ENCODE measurements at regions of chr20 and their contacts with region 1.

Region 1: DNA sequence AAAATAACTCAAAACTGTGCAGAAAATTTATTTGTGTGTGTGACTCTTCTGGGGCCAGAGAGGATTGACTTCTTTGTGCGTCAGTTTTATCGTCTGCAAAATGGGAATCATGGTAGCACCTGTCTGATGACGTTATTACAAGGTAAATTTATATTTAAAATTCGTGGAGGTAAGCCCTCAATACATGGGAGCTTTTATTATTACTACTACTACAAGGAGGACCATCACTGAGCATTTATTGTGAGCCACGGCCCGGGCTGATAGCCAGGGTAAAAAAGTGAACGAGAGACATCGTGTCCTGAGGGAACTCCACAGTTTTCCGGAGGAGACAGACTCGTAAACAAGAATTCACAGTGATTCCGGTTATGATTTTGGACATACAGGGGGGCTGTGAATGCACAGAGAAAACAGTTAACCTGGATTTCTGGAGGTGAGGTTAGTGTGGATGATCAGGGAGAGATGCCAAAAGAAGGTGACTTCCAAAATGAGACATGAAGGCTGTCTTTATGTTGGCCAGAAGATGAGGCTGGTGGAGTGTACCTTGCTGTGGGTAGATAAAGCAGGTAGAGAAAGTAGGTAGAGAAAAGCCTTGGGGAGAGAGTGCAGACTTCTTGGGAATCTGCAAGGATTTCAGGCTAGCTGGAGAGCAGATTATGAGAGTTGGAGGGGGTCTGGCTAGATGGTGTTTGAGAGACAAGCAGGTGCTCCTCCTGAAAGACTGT is 10.6 kb upstream of the SERINC3 start:
- DNase-seq: no peak
- H3K4me3 ChIP-seq: peak overlapping the region; percentile 67
- CTCF ChIP-seq: no peak

Region 2: GRCh38 chr20:44598423-44599305 is 66.2 kb after region 1 on chr20:
- in situ Hi-C with region 1: no loop called
- DNase-seq: no peak
- H3K4me3 ChIP-seq: no peak overlapping the region
- CTCF ChIP-seq: peak; percentile 25

Region 3: GRCh38 chr20:44609511-44610312 is 77.3 kb after region 1 on chr20:
- in situ Hi-C with region 1: loop called (anchors 10 kb)
- DNase-seq: peak; percentile 49
- H3K4me3 ChIP-seq: no peak overlapping the region
- CTCF ChIP-seq: peak; percentile 99

Measured in astrocyte of the cerebellum (primary cell).